A673 (cell line): ENCODE measurements at regions of chr5 and their contacts with region 1.

Region 1: GRCh38 chr5:54443270-54443669 is 12.2 kb upstream of the HSPB3 start:
- DNase-seq: peak; percentile 71
- H3K4me3 ChIP-seq: no peak overlapping the region
- H3K27ac ChIP-seq: no peak overlapping the region
- H3K4me1 ChIP-seq: peaks cover 6% of the 10 kb centered on the region
- H3K27me3 ChIP-seq: no peaks in the 10 kb centered on the region
- CTCF ChIP-seq: peak; percentile 66

Region 2: DNA sequence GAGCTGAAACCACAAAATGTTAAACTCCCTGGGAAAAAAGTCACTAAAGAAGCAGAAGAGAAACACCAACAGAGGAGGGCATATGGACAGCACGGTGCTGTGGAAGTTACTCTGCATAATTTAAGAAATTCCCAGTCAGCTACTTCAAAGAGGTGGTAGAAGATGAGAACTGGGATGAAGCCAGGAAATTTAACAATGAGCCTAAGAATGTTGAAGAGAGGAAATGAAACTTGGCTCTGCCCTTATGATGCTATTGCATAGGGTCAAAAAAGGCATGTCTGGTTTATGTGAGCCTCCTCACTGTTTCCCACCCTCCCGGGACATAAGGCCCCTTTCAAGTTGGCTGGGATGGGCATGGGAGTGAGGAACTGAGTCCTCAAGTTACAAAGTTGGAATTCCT is 48.9 kb after region 1 on chr5:
- CTCF ChIA-PET with region 1: no interaction called
- POLR2A ChIA-PET with region 1: no interaction called
- intact Hi-C with region 1: loop called (anchors 1 kb)
- DNase-seq: peak; percentile 17
- H3K4me3 ChIP-seq: no peak overlapping the region
- H3K27ac ChIP-seq: no peak overlapping the region
- H3K4me1 ChIP-seq: peaks cover 5% of the 10 kb centered on the region
- H3K27me3 ChIP-seq: no peaks in the 10 kb centered on the region
- CTCF ChIP-seq: no peak

Region 3: DNA sequence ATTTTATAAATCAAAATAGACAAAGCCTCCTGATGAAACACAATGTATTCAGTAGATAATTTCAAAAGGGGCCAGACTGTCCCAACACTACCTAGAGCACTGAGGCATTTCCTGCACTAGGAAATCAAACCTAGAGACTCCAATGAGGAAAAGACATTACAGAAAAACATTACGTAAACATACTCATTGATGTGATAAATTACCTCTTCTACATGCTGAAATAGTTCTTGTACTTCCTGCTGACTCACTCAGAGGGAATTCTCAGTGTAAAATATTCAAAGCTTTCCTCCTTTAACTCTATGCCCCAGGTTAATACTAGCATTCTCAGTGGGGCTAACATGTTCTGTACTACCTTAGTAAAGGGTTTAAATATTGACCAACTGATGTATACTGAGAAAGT is 364.2 kb after region 1 on chr5:
- CTCF ChIA-PET with region 1: no interaction called
- POLR2A ChIA-PET with region 1: no interaction called
- intact Hi-C with region 1: no loop called
- DNase-seq: peak; percentile 76
- H3K4me3 ChIP-seq: no peak overlapping the region
- H3K27ac ChIP-seq: peak overlapping the region; percentile 50
- H3K4me1 ChIP-seq: no peaks in the 10 kb centered on the region
- H3K27me3 ChIP-seq: no peaks in the 10 kb centered on the region
- CTCF ChIP-seq: no peak

Region 4: GRCh38 chr5:54895816-54896341 is 452.6 kb after region 1 on chr5:
- CTCF ChIA-PET with region 1: interaction called, 3 read pairs
- POLR2A ChIA-PET with region 1: no interaction called
- intact Hi-C with region 1: loop called (anchors 5 kb)
- DNase-seq: peak; percentile 86
- H3K4me3 ChIP-seq: no peak overlapping the region
- H3K27ac ChIP-seq: peak overlapping the region; percentile 74
- H3K4me1 ChIP-seq: peaks cover 16% of the 10 kb centered on the region
- H3K27me3 ChIP-seq: no peaks in the 10 kb centered on the region
- CTCF ChIP-seq: peak; percentile 78